CD14-positive monocyte (primary cell): ENCODE measurements at regions of chr18 and their contacts with region 1.

Region 1: GRCh38 chr18:45664824-45665763 is 49.8 kb downstream of the SLC14A2 start:
- DNase-seq: peak; percentile 52 to 74 (median 65)
- H3K4me3 ChIP-seq: no peak overlapping the region
- H3K4me3 Mint-ChIP-seq: peak overlapping the region in 1 of 2 donors; percentile 73
- H3K27ac ChIP-seq: no peak overlapping the region
- H3K27ac Mint-ChIP-seq: peak overlapping the region in 6 of 7 donors; percentile 19 to 76 (median 68)
- H3K4me1 ChIP-seq: peaks cover 50 to 61% of the 10 kb centered on the region in 2 donors
- H3K4me1 Mint-ChIP-seq: peaks cover 56% of the 10 kb centered on the region
- H3K27me3 ChIP-seq: no peaks in the 10 kb centered on the region
- H3K27me3 Mint-ChIP-seq: peaks cover 0 to 1% (median 0%) of the 10 kb centered on the region in 3 donors
- CTCF ChIP-seq: peak; percentile 93

Region 2: DNA sequence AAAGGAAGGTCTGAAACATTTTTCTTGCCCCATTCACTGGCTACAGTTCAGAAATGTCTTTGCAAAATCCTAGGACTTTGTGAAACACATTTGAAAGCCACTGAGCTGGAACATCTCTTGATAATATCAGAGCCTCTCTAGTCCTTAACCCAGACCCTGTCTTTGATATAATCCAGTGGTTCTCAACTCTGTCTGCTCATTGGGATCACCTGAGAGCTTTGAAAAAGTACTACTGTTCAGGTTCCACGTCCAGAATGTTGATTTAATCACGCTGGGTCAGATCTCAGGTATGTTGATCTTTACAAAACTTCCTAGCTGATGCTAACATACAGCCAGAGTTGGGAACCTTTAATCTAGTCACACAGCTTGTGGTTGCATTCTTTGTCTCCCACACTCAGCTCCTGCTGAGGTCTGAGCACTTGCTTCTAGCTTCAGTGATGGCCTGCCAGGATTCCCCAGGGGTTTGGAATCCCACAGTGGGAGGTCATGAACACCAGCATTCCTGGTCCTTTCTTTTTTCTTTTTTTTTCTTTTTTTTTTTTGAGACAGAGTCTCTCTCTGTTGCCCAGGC is 721.7 kb before region 1 on chr18:
- intact Hi-C with region 1: no loop called
- DNase-seq: no peak
- H3K4me3 ChIP-seq: no peak overlapping the region
- H3K4me3 Mint-ChIP-seq: no peak overlapping the region
- H3K27ac ChIP-seq: no peak overlapping the region
- H3K27ac Mint-ChIP-seq: no peak overlapping the region
- H3K4me1 ChIP-seq: peaks cover 10 to 14% of the 10 kb centered on the region in 2 donors
- H3K4me1 Mint-ChIP-seq: peaks cover 16% of the 10 kb centered on the region
- H3K27me3 ChIP-seq: no peaks in the 10 kb centered on the region
- H3K27me3 Mint-ChIP-seq: peaks cover 1 to 3% (median 3%) of the 10 kb centered on the region in 3 donors
- CTCF ChIP-seq: no peak

Region 3: GRCh38 chr18:45839414-45840395 is 174.6 kb after region 1 on chr18:
- intact Hi-C with region 1: loop called (anchors 5 to 10 kb)
- DNase-seq: peak in 2 of 3 donors; percentile 34 to 38
- H3K4me3 ChIP-seq: no peak overlapping the region
- H3K4me3 Mint-ChIP-seq: peak overlapping the region; percentile 47 to 73
- H3K27ac ChIP-seq: no peak overlapping the region
- H3K27ac Mint-ChIP-seq: no peak overlapping the region
- H3K4me1 ChIP-seq: peaks cover 18 to 40% of the 10 kb centered on the region in 2 donors
- H3K4me1 Mint-ChIP-seq: peaks cover 31% of the 10 kb centered on the region
- H3K27me3 ChIP-seq: peaks cover 13 to 22% of the 10 kb centered on the region in 2 donors
- H3K27me3 Mint-ChIP-seq: peaks cover 17 to 35% (median 22%) of the 10 kb centered on the region in 3 donors
- CTCF ChIP-seq: peak; percentile 55

Region 4: GRCh38 chr18:45879681-45880655 is 214.9 kb after region 1 on chr18:
- intact Hi-C with region 1: loop called in 1 of 2 experiments (anchors 10 kb)
- DNase-seq: peak; percentile 44 to 60 (median 52)
- H3K4me3 ChIP-seq: no peak overlapping the region
- H3K4me3 Mint-ChIP-seq: no peak overlapping the region
- H3K27ac ChIP-seq: peak overlapping the region in 1 of 2 donors; percentile 49
- H3K27ac Mint-ChIP-seq: peak overlapping the region in 4 of 7 donors; percentile 11 to 77 (median 54)
- H3K4me1 ChIP-seq: no peaks in the 10 kb centered on the region
- H3K4me1 Mint-ChIP-seq: peaks cover 7% of the 10 kb centered on the region
- H3K27me3 ChIP-seq: no peaks in the 10 kb centered on the region
- H3K27me3 Mint-ChIP-seq: no peaks in the 10 kb centered on the region
- CTCF ChIP-seq: peak; percentile 99

Region 5: DNA sequence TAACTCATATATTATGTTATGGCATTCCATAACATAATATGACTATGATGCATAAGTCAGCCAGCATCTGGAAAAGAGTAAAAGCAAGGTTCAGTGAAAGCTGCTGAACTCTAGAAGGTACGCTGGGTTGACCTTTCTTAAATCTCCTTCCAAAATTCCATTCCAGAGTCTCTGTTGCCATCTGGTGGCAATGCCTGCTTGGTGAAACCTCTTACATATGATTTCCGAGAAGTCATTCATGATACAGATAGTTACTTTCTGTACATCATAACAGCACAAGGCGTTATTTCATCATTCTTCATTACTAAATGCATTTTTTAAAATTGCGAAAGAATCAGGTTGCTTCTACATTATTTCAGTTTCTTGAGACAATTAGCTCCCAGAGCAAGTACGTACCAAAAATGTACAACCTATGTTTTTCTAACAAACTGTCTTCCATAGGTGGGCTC is 309.0 kb after region 1 on chr18:
- intact Hi-C with region 1: loop called in 1 of 2 experiments (anchors 10 kb)
- DNase-seq: peak; percentile 85 to 94 (median 91)
- H3K4me3 ChIP-seq: peak overlapping the region in 1 of 3 experiments; percentile 36
- H3K4me3 Mint-ChIP-seq: peak overlapping the region; percentile 7 to 82
- H3K27ac ChIP-seq: peak overlapping the region; percentile 37 to 78
- H3K27ac Mint-ChIP-seq: peak overlapping the region; percentile 79 to 91 (median 89)
- H3K4me1 ChIP-seq: peaks cover 5 to 15% of the 10 kb centered on the region in 2 donors
- H3K4me1 Mint-ChIP-seq: peaks cover 18% of the 10 kb centered on the region
- H3K27me3 ChIP-seq: no peaks in the 10 kb centered on the region
- H3K27me3 Mint-ChIP-seq: peaks cover 0 to 1% (median 0%) of the 10 kb centered on the region in 3 donors
- CTCF ChIP-seq: peak; percentile 80